RWPE1 (cell line): ENCODE measurements at regions of chr6 and their contacts with region 1.

Region 1: GRCh38 chr6:79570129-79571029 is 33.1 kb upstream of the LCA5 start:
- DNase-seq: peak; percentile 47
- H3K27ac ChIP-seq: no peak overlapping the region
- CTCF ChIP-seq: peak; percentile 68

Region 2: GRCh38 chr6:79672631-79673111 is 102.3 kb after region 1 on chr6:
- CTCF ChIA-PET with region 1: interaction called, 10 read pairs
- POLR2A ChIA-PET with region 1: no interaction called
- DNase-seq: peak; percentile 28
- H3K27ac ChIP-seq: no peak overlapping the region
- CTCF ChIP-seq: peak; percentile 53